Transverse colon (tissue), 4 donors: ENCODE measurements at regions of chr3 and their contacts with region 1.

Region 1: DNA sequence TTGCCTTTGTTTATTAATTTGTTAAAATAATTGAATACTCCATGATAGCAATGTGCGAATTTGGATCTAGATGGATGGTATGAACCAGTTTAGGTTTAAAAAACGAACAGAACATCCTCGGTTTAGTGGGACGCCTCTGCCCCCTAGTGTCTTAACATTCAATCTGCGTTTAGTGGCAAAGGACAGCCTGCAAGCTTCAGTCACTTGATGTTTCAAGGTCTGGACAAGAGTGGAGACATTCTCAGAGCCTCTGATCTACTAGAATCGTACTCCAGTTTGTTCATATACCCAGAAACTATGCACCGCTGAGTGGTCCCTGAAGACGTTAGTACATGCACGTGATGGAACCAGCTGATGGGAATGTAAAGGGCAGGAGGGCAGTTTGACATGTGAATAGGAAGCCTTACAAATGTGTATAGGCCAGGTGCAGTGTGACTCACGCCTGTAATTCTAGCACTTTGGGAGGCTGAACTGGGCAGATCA is 17.8 kb upstream of the ATP13A4 start:
- DNase-seq: peak; percentile 58
- H3K4me3 ChIP-seq: no peak overlapping the region
- H3K27ac ChIP-seq: no peak overlapping the region
- H3K4me1 ChIP-seq: no peaks in the 10 kb centered on the region
- H3K27me3 ChIP-seq: no peaks in the 10 kb centered on the region
- CTCF ChIP-seq: peak; percentile 66 to 73 (median 71)
- EP300 ChIP-seq: no peak
- POLR2A ChIP-seq: no peak

Region 2: DNA sequence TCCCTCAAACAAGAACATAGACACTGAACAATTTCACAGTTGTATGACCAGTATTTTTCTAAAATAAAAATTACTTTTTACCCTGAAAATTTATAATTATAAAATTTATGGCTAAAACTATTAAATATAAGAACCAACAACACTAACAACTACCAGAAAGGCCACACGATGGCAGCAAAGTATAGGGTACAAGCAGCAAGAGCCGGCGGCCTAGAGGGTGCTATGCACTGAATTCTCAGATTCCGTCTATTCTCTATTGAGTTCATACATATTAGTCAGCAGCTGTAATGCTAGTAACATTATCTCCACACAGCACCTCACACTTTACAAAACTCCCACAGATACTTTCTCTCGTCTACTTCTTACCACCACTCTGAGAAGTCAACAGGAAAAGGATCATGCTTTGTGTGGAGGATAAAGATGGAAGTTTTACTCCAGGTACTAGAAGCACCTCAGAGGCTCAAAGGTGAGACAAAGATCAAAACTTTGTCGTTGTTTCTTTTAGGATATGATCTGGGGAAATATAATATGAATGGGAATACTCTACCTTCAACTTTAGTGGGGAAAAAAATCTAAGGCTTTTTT is 1005.7 kb before region 1 on chr3:
- in situ Hi-C with region 1: loop called in 2 of 4 experiments (anchors 10 to 25 kb)
- intact Hi-C with region 1: no loop called
- DNase-seq: peak; percentile 54
- H3K4me3 ChIP-seq: no peak overlapping the region
- H3K27ac ChIP-seq: no peak overlapping the region
- H3K4me1 ChIP-seq: no peaks in the 10 kb centered on the region
- H3K27me3 ChIP-seq: no peaks in the 10 kb centered on the region
- CTCF ChIP-seq: peak; percentile 45 to 67 (median 61)
- EP300 ChIP-seq: no peak
- POLR2A ChIP-seq: no peak

Region 3: DNA sequence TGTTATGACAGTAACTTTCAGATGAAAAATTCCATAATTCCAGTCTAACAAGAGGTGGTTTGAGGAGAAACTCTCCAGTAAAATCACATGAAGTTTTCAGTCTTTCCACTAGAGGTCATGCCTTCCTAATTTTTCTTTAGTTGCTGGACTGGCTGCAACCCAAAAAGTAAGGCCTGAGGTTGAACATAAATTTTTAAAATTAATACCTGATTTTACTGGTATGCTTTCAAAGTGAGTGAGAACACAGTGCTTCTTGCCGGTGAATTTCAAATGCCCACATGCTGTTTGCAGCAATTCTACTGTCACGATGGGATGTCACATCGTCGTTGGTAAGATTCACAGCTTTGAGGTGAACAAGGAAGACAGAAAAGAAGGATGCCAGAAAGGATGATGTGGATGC is 756.1 kb before region 1 on chr3:
- in situ Hi-C with region 1: loop called (anchors 5 to 25 kb)
- intact Hi-C with region 1: loop called (anchors 10 kb)
- DNase-seq: no peak
- H3K4me3 ChIP-seq: no peak overlapping the region
- H3K27ac ChIP-seq: no peak overlapping the region
- H3K4me1 ChIP-seq: peaks cover 0 to 12% (median 2%) of the 10 kb centered on the region in 4 donors
- H3K27me3 ChIP-seq: no peaks in the 10 kb centered on the region
- CTCF ChIP-seq: peak; percentile 61 to 79 (median 71)
- EP300 ChIP-seq: no peak
- POLR2A ChIP-seq: no peak

Region 4: DNA sequence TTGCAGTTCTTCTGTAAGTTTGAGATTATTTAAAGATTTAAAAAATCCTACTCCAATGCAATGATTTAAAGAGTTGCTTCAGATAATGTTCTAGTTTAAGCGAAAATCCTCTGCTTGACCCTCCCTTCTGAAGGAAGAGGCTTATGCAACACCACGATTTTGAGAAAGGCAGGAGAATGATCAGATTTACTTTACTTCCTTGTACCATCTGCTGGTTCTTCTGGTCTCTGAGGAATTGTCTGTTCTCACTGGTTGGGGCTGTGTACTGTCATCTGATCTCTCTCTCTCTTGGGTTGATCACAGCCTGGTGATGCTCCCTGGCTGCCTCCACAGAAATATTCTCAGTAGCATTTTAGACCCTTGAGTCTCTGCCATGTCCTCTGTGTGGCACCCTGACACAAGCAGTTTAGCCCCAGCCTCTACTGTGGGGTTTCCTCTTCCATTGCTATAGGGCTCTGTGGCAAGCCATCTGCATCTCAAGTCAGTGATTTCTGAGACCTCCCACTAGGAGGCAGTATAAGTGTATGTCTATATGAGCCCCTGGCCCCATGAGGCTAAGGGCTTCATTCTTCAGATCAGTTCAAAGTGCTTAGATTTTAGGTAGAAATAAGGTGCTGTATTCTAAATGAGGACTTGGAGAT is 382.2 kb before region 1 on chr3:
- in situ Hi-C with region 1: loop called in 1 of 4 experiments (anchors 25 kb)
- intact Hi-C with region 1: no loop called
- DNase-seq: no peak
- H3K4me3 ChIP-seq: no peak overlapping the region
- H3K27ac ChIP-seq: no peak overlapping the region
- H3K4me1 ChIP-seq: no peaks in the 10 kb centered on the region
- H3K27me3 ChIP-seq: no peaks in the 10 kb centered on the region
- CTCF ChIP-seq: peak in 2 of 5 experiments; percentile 13 to 29
- EP300 ChIP-seq: no peak
- POLR2A ChIP-seq: no peak

Region 5: GRCh38 chr3:193464889-193465288 is 107.6 kb before region 1 on chr3:
- in situ Hi-C with region 1: loop called in 2 of 4 experiments (anchors 5 to 25 kb)
- intact Hi-C with region 1: no loop called
- DNase-seq: no peak
- H3K4me3 ChIP-seq: no peak overlapping the region
- H3K27ac ChIP-seq: peak overlapping the region in 1 of 4 donors; percentile 31
- H3K4me1 ChIP-seq: peaks cover 0 to 10% (median 4%) of the 10 kb centered on the region in 4 donors
- H3K27me3 ChIP-seq: no peaks in the 10 kb centered on the region
- CTCF ChIP-seq: no peak
- EP300 ChIP-seq: no peak
- POLR2A ChIP-seq: no peak